ENCODE measurements at regions of chr1 and their contacts with region 1.

Region 1: GRCh38 chr1:183159960-183160359 is 26.1 kb upstream of the LAMC2 start:
- DNase-seq: peak; percentile 97 to 99
- H3K4me3 ChIP-seq: peak overlapping the region; percentile 30; the same call in 1 of the 2 replicates
- H3K27ac ChIP-seq: peak overlapping the region; percentile 91
- H3K4me1 ChIP-seq: peaks cover 64% of the 10 kb centered on the region
- H3K27me3 ChIP-seq: no peaks in the 10 kb centered on the region
- CTCF ChIP-seq: no peak

Region 2: DNA sequence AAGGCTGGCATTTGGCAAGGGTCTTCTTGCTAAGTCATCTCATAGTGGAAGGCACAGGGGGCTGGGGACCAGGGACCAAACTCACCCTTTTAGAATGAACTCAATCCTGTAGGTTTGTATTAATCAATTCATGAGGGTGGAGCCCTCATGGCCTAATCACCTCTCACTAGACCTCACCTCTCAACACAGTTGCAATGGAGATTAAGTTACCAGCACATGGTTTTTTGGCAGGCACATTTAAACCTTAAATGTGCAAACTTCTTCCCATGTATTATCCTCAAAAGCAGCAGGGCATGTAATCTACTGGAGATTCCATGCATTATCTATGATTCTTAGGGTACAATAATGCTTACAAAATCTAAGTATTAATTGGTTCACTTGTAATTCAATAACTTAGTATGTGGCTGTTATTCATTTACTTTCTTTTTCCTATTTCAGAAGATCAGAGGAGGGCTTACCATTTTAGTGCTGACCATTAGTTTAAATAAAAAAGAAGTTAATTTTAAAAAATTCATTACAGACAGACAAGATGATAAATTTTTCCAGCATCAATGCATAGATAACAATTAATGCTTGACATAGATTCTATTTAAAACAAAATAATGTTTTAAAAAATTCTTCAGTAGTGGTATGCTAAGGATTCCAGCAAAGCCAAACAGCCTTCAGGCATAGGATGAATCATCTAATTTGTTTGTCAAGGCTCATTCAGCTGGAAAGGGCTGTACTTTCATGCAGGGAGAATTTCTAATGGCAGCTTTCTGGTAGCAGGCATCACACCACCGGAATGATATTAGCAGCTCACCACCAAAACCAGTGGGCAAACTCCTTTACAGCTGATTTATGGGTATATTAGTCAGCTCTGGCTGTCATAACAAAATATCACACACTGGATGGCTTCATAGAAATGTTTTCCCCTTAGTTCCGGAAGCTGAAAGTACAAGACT is 973.9 kb before region 1 on chr1:
- CTCF ChIA-PET with region 1: no interaction called
- POLR2A ChIA-PET with region 1: no interaction called
- intact Hi-C with region 1: loop called (anchors 5 kb)
- DNase-seq: peak; percentile 76 to 97
- H3K4me3 ChIP-seq: peak overlapping the region; percentile 12; the same call in 1 of the 2 replicates
- H3K27ac ChIP-seq: peak overlapping the region; percentile 66
- H3K4me1 ChIP-seq: peaks cover 56% of the 10 kb centered on the region
- H3K27me3 ChIP-seq: no peaks in the 10 kb centered on the region
- CTCF ChIP-seq: no peak

Region 3: GRCh38 chr1:183185941-183186490 is 26.1 kb after region 1 on chr1 and contains the start of gene LAMC2:
- CTCF ChIA-PET with region 1: no interaction called
- POLR2A ChIA-PET with region 1: interaction called, 10 read pairs
- intact Hi-C with region 1: loop called (anchors 1 kb)
- DNase-seq: peak; percentile 89 to 98
- H3K4me3 ChIP-seq: peak within 1 kb of the TSS; percentile 75
- H3K27ac ChIP-seq: peak within 1 kb of the TSS; percentile 85
- H3K4me1 ChIP-seq: peaks cover 42% of the 10 kb centered on the region
- H3K27me3 ChIP-seq: no peaks in the 10 kb centered on the region
- CTCF ChIP-seq: peak; percentile 63
- total RNA-seq, gene LAMC2: 105 and 109 TPM in 2 replicates

Region 4: GRCh38 chr1:183272066-183272801 is 112.3 kb after region 1 on chr1:
- CTCF ChIA-PET with region 1: no interaction called
- POLR2A ChIA-PET with region 1: no interaction called
- intact Hi-C with region 1: loop called (anchors 2 kb)
- DNase-seq: peak; percentile 61 to 85
- H3K4me3 ChIP-seq: no peak overlapping the region
- H3K27ac ChIP-seq: peak overlapping the region; percentile 92
- H3K4me1 ChIP-seq: peaks cover 46% of the 10 kb centered on the region
- H3K27me3 ChIP-seq: no peaks in the 10 kb centered on the region
- CTCF ChIP-seq: no peak

Region 5: DNA sequence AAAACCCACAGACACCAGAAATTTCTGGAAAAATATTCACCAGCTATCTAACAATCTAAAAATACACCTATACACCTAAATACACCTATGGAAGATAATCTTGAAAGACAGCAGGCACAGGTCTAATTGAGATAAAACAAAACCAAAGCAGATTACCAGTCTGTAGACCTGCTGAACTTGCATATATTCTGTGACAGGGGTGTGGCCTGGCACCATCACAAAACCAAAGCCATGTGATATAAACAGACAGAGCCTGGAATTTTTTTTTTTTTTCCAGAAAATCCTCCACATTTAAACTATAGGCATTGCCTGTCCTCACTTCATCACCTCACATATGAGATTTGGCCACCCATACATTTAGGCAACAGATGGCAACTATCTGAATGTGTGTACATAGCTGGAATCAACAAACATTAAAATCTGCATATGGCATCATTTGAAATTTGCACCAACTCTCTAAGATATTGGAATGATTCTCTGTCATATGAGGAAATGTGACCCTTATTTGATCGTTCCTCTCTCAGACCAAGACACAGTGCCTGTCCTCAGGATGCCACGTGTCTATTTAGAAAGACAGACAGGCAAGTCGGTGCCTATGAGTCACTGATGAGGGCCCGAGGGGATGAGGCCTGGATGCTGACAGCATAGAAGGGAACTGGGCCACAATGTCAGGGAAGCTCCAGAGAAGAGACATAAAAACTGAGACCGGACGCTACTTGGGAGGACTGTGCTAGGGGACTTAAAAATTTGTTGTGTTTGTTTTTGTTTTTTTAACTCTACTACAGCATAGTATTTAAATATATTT is 225.6 kb after region 1 on chr1:
- CTCF ChIA-PET with region 1: no interaction called
- POLR2A ChIA-PET with region 1: no interaction called
- intact Hi-C with region 1: no loop called
- DNase-seq: no peak
- H3K4me3 ChIP-seq: no peak overlapping the region
- H3K27ac ChIP-seq: no peak overlapping the region
- H3K4me1 ChIP-seq: no peaks in the 10 kb centered on the region
- H3K27me3 ChIP-seq: no peaks in the 10 kb centered on the region
- CTCF ChIP-seq: no peak

Region 6: DNA sequence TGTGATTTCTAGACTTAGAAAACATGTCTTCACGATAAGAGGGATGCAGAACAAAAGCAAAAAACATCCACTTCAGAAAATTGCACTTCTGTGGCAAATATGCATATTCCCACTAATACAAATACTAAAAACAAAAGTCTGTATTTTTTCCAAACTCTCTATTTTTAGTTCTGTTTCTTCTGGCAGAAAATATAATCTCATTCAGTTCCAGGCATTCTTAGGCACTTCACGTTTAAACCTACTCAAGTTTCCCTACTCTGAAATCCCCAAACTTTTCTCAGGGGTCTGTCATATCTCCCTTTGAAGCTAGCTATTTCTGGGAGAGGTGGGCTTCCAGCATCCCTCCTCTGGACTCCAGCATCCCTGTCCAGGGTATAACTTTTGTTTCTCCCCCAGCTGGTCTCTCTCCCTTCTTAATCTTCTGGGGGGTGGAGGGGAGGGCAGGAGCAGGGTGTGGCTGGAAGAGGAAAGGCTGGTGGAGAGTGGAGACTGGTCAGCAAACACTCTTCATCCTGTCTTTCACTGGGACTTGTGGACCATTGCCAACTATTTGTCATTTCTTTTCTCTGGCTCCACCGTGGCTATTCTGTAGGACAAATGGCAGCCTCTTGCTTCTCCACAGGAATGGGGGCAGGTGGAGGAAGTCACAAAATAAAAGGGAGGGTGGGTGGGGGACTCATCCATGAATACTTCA is 449.9 kb after region 1 on chr1:
- CTCF ChIA-PET with region 1: no interaction called
- POLR2A ChIA-PET with region 1: interaction called, 4 read pairs
- intact Hi-C with region 1: loop called (anchors 2 kb)
- DNase-seq: peak in 1 of 2 experiments; percentile 46
- H3K4me3 ChIP-seq: no peak overlapping the region
- H3K27ac ChIP-seq: peak overlapping the region; percentile 94
- H3K4me1 ChIP-seq: peaks cover 60% of the 10 kb centered on the region
- H3K27me3 ChIP-seq: no peaks in the 10 kb centered on the region
- CTCF ChIP-seq: no peak